Activated naive CD4-positive, alpha-beta T cell treated with anti-CD3 and anti-CD28 coated beads for 36 hours (primary cell): ENCODE measurements at regions of chr16 and their contacts with region 1.

Region 1: DNA sequence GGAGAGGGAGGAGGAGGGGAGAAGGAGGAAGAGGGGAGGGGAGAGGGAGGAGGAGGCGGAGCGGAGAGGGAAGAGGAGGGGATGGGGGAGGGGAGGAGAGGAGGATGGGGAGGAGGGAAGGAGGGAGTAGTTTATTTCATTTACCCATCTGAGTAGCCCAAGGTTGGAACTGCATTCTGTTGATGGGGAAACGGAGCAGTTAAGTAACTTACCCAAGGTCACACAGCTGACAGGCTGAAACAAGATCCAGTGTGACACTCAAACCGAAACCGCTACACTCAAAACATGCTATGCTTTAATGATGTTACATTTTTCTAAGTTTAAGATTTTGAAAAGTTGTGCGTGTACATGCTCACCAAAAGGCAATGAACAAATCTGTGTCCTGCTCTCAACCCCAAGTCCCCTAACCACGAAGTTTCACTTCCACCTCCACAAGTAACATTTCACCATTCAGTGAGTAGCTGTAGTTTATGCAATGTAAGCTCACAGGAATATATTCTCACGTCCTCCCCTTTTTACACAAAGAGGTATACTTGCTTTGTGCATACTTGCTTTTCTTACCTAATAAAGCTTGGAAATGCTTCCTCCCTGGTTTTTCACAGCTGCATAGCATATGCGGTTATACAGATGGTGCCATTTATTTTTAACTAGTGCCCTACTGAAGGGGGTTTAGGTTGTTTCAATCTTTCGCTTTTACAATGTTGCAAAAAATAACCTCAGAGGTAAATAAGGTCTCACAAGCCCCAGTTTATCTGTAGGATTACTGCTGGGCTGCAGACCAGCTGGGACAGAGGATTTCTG is 275.3 kb downstream of the PARN start:
- DNase-seq: peak; percentile 81
- H3K4me3 Mint-ChIP-seq: peak overlapping the region; percentile 46
- H3K27ac Mint-ChIP-seq: no peak overlapping the region
- H3K4me1 Mint-ChIP-seq: peaks cover 10% of the 10 kb centered on the region
- H3K27me3 Mint-ChIP-seq: peaks cover 5% of the 10 kb centered on the region

Region 2: GRCh38 chr16:13571036-13571435 is 783.7 kb before region 1 on chr16:
- CTCF ChIA-PET with region 1: no interaction called
- intact Hi-C with region 1: no loop called
- DNase-seq: no peak
- H3K4me3 Mint-ChIP-seq: no peak overlapping the region
- H3K27ac Mint-ChIP-seq: no peak overlapping the region
- H3K4me1 Mint-ChIP-seq: no peaks in the 10 kb centered on the region
- H3K27me3 Mint-ChIP-seq: no peaks in the 10 kb centered on the region

Region 3: GRCh38 chr16:14309001-14309886 is 45.5 kb before region 1 on chr16:
- CTCF ChIA-PET with region 1: no interaction called
- intact Hi-C with region 1: loop called (anchors 2 kb)
- DNase-seq: peak; percentile 67
- H3K4me3 Mint-ChIP-seq: peak overlapping the region; percentile 58
- H3K27ac Mint-ChIP-seq: peak overlapping the region; percentile 50
- H3K4me1 Mint-ChIP-seq: peaks cover 50% of the 10 kb centered on the region
- H3K27me3 Mint-ChIP-seq: no peaks in the 10 kb centered on the region